ENCODE measurements at regions of chr10 and their contacts with region 1.

Region 1: DNA sequence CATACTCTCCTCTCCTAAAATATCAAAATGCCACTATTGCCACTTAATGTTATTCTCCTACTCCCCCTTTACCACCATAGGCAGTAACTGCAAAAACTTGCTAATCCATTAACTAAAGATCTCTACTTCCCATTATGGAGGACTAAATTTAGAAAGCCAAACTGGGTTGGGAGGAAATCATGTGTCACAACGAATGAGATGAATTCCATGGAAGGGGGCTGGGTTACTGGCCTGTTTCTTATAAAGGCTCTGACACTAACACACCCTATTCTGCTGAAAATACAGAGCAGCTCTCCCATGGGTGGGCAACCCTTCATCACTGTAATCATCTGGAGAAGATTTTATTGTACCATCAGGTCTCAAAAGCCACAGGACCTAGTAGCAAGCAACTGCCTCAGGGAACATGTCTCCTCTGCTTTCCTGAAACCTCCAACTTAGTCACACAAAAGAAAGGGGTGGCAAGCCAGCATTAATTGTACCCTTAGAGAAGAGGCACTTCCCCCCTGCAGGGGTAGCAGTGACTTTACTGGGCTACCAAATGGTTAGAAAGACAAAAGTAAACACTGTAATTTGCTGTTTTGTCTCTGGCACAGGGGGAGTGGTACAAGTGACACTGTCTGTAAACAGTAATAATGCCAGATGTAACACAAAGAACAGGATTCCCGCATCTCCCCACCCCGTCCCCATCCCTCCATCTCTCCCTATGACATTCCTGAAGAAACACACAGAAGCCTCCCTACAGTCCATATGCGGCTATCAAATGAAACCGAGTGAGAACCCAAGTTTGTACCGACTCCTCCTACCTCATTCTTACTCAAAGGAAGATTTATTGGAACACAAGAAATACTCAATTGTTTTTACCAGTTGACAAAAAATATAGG is 81.6 kb downstream of the ARMH3 start:
- DNase-seq: no peak
- ATAC-seq: no peak
- H3K4me3 ChIP-seq: 0 out of 2 replicates have a peak overlapping the region, but pooled peaks have one; percentile 42
- H3K27ac ChIP-seq: peak overlapping the region; percentile 99
- H3K4me1 ChIP-seq: peaks cover 50% of the 10 kb centered on the region
- H3K27me3 ChIP-seq: no peaks in the 10 kb centered on the region
- CTCF ChIP-seq: no peak
- EP300 ChIP-seq: no peak
- POLR2A ChIP-seq: no peak
- RAD21 ChIP-seq: no peak

Region 2: DNA sequence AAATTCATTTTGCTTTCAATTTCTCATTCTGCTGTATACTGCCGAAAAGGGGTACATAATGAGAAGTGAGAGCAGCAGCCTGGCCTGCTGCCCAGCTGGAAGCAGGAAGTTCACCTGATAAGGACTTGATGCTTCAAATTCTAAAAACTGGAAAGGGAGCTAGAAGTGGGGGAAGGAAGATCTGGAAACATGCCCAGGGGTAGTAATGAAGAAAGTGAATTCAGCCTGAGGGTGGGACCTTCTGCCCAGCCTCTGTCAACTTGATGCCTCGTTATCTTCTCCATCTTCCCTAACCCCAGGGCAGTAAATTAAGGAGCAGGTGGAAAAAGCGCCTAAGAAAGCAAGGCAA is 12.3 kb after region 1 on chr10:
- CTCF ChIA-PET with region 1: interaction called, 6 read pairs
- POLR2A ChIA-PET with region 1: interaction called, 7 read pairs
- RAD21 ChIA-PET with region 1: interaction called, 7 read pairs
- SMC1A ChIA-PET with region 1: interaction called, 13 read pairs
- in situ Hi-C with region 1: no loop called
- intact Hi-C with region 1: no loop called
- DNase-seq: no peak
- ATAC-seq: peak; percentile 94
- H3K4me3 ChIP-seq: peak overlapping the region; percentile 25; the same call in 1 of the 2 replicates
- H3K27ac ChIP-seq: peak overlapping the region; percentile 88
- H3K4me1 ChIP-seq: peaks cover 16% of the 10 kb centered on the region
- H3K27me3 ChIP-seq: no peaks in the 10 kb centered on the region
- CTCF ChIP-seq: no peak
- EP300 ChIP-seq: no peak
- POLR2A ChIP-seq: no peak
- RAD21 ChIP-seq: no peak